CD8-positive, alpha-beta memory T cell (primary cell): ENCODE measurements at regions of chr1 and their contacts with region 1.

Region 1: DNA sequence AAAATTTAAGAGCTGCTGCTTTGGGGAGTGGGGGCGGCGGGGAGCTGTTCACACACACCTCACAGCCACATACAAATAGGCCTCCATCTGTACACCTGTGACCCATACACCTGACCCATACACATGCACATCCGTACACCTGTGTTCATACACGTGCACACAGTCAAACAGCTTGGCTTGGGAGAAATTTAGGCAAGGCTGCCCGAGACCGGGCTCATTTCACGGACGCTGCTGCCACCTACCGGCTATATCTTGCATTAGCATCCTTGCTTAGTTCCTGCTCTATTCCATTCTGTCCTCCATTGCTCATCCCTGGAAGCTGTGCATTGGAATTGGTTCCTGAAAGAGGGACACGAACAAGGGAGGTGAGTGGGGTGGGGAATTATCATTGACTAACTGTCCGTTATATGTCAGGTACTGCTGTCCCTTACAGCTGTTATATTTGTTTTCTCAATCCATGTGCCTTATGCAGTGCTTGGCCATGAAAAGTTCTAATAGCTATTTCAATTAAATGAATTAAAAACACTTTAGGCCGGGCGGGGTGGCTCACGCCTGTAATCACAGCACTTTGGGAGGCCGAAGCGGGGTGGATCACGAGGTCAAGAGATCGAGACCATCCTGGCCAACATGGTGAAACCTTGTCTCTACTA is 37.1 kb upstream of the EPB41 start:
- DNase-seq: peak; percentile 63 to 81 (median 68)
- H3K4me3 ChIP-seq: no peak overlapping the region
- H3K4me3 Mint-ChIP-seq: no peak overlapping the region
- H3K27ac ChIP-seq: no peak overlapping the region
- H3K27ac Mint-ChIP-seq: peak overlapping the region in 1 of 8 donors; percentile 41
- H3K4me1 ChIP-seq: peaks cover 6% of the 10 kb centered on the region
- H3K4me1 Mint-ChIP-seq: peaks cover 8 to 11% (median 10%) of the 10 kb centered on the region in 3 donors
- H3K27me3 ChIP-seq: no peaks in the 10 kb centered on the region
- H3K27me3 Mint-ChIP-seq: peaks cover 2 to 15% of the 10 kb centered on the region in 2 donors

Region 2: GRCh38 chr1:28359592-28360239 is 517.5 kb before region 1 on chr1:
- CTCF ChIA-PET with region 1: interaction called, 55 read pairs
- POLR2A ChIA-PET with region 1: no interaction called
- DNase-seq: peak; percentile 48 to 78 (median 60)
- H3K4me3 ChIP-seq: no peak overlapping the region
- H3K4me3 Mint-ChIP-seq: no peak overlapping the region
- H3K27ac ChIP-seq: no peak overlapping the region
- H3K27ac Mint-ChIP-seq: no peak overlapping the region
- H3K4me1 ChIP-seq: no peaks in the 10 kb centered on the region
- H3K4me1 Mint-ChIP-seq: peaks cover 1 to 4% (median 3%) of the 10 kb centered on the region in 3 donors
- H3K27me3 ChIP-seq: no peaks in the 10 kb centered on the region
- H3K27me3 Mint-ChIP-seq: no peaks in the 10 kb centered on the region

Region 3: DNA sequence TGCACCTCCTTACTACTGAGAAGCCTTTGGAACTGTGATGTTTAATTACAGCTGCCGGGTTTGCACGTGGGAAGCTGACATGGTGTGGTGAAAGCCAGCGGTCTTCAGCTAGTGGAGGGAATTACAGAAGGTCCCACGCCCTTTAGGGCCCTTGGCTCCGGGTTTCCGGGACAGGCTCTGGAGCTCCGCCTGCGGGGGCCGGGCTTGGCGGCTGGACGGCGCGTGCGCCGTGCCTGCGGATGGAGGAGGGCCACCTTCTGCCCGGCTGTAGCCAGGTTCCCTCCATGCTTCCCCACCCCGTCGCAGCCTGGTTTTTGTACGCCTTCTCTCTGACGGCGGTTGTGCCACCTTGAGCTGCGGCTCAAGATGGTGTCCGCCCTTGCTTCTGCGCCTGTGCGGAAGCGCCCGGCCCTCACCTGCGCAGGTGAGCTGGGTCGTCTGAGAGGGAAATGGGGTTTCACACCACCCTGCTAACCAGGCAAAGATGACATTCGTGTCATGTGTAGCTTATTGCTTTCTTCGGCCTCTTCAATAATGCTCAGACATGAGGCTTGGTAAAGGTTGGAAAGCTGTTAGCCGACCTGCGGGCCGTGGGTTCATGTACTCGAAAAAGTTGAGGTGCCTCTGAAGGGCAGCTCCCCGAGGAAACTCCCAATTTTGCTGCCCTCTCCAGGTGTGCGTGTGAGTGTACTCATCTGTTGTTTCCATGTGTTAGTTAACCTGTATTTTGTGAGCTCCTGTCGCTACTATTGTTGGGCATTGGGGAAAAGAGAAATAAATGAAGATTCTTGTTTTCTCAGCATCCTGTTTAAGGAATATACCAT is 101.9 kb before region 1 on chr1:
- CTCF ChIA-PET with region 1: interaction called, 11 read pairs
- POLR2A ChIA-PET with region 1: no interaction called
- DNase-seq: peak; percentile 62 to 79 (median 73)
- H3K4me3 ChIP-seq: peak overlapping the region; percentile 56
- H3K4me3 Mint-ChIP-seq: peak overlapping the region; percentile 80 to 95 (median 86)
- H3K27ac ChIP-seq: no peak overlapping the region
- H3K27ac Mint-ChIP-seq: peak overlapping the region; percentile 77 to 94 (median 84)
- H3K4me1 ChIP-seq: peaks cover 10% of the 10 kb centered on the region
- H3K4me1 Mint-ChIP-seq: peaks cover 7 to 14% (median 12%) of the 10 kb centered on the region in 3 donors
- H3K27me3 ChIP-seq: no peaks in the 10 kb centered on the region
- H3K27me3 Mint-ChIP-seq: no peaks in the 10 kb centered on the region

Region 4: GRCh38 chr1:29033829-29034466 is 156.7 kb after region 1 on chr1:
- CTCF ChIA-PET with region 1: interaction called, 182 read pairs
- POLR2A ChIA-PET with region 1: interaction called, 4 read pairs
- DNase-seq: peak in 2 of 5 donors; percentile 16 to 26
- H3K4me3 ChIP-seq: no peak overlapping the region
- H3K4me3 Mint-ChIP-seq: no peak overlapping the region
- H3K27ac ChIP-seq: no peak overlapping the region
- H3K27ac Mint-ChIP-seq: peak overlapping the region in 3 of 8 donors; percentile 18 to 51 (median 28)
- H3K4me1 ChIP-seq: no peaks in the 10 kb centered on the region
- H3K4me1 Mint-ChIP-seq: peaks cover 0 to 4% (median 3%) of the 10 kb centered on the region in 3 donors
- H3K27me3 ChIP-seq: no peaks in the 10 kb centered on the region
- H3K27me3 Mint-ChIP-seq: no peaks in the 10 kb centered on the region

Region 5: GRCh38 chr1:29202584-29203340 is 325.5 kb after region 1 on chr1:
- CTCF ChIA-PET with region 1: interaction called, 38 read pairs
- POLR2A ChIA-PET with region 1: no interaction called
- DNase-seq: peak; percentile 69 to 90 (median 83)
- H3K4me3 ChIP-seq: no peak overlapping the region
- H3K4me3 Mint-ChIP-seq: no peak overlapping the region
- H3K27ac ChIP-seq: peak overlapping the region; percentile 35
- H3K27ac Mint-ChIP-seq: peak overlapping the region in 1 of 8 donors; percentile 60
- H3K4me1 ChIP-seq: no peaks in the 10 kb centered on the region
- H3K4me1 Mint-ChIP-seq: peaks cover 0 to 5% (median 3%) of the 10 kb centered on the region in 3 donors
- H3K27me3 ChIP-seq: no peaks in the 10 kb centered on the region
- H3K27me3 Mint-ChIP-seq: no peaks in the 10 kb centered on the region